Activated T-helper 1 cell treated with anti-CD3 and anti-CD28 coated beads, Interleukin-12 subunit alpha, Interleukin-12 subunit beta, Interleukin-2, Interleukin-4 antibody, amounts not matched to agents 30 ng/mL and 10 ng/mL and 1 ng/mL, durations not matched to agents 14 hours and 24 hours and 36 hours (primary cell): ENCODE measurements at regions of chr12 and their contacts with region 1.

Region 1: DNA sequence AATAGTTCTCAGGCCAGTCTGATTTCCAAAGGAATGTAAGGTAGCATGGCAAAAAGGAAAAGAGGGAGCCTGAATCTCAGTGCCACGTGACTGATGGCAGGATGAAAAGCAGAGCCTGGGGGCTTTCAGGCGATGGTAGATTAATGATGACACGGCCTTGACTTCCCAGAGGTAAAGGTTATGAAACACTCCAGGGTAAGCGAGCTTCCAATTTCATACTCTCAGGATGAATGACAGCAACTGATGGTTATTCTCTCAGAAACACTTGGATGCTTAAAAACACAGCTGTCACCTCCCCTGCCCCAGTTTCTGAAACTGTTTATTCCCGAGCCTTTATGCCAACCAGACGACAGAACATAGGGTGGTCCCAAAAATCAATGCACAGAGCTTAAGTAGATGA is 28.8 kb downstream of the GDF11 start:
- DNase-seq: no peak
- H3K4me3 Mint-ChIP-seq: no peak overlapping the region
- H3K27ac Mint-ChIP-seq: no peak overlapping the region
- H3K4me1 Mint-ChIP-seq: peaks cover 5% of the 10 kb centered on the region
- H3K27me3 Mint-ChIP-seq: no peaks in the 10 kb centered on the region

Region 2: DNA sequence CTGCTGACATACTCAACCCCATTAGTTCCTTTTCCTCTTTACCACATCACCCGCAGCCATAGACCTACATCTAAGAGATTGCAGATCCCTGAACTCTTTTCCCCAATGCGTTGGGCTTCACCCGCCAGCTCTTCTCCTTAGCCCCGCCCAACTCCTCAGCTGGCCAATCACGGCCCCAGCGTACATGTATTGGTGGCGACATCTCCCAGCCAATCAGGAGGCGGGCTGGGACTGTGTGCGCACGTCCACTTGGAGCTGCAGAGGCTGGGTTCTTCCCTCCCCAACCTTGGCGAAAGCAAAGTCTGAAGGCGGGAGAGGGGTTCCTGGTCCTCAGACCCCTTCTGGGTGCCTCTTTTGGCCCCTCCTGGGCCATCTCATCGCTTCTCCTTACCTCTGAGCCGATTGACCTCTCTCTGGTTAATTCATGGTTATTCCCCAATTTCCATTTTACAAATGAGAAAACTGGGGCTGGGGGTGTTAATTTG is 1211.3 kb before region 1 on chr12:
- intact Hi-C with region 1: no loop called
- DNase-seq: peak; percentile 86
- H3K4me3 Mint-ChIP-seq: peak overlapping the region; percentile 78
- H3K27ac Mint-ChIP-seq: peak overlapping the region; percentile 91
- H3K4me1 Mint-ChIP-seq: peaks cover 47% of the 10 kb centered on the region
- H3K27me3 Mint-ChIP-seq: no peaks in the 10 kb centered on the region

Region 3: GRCh38 chr12:55743116-55743921 is 28.4 kb before region 1 on chr12 and contains the start of gene GDF11:
- intact Hi-C with region 1: no loop called
- DNase-seq: peak; percentile 39
- H3K4me3 Mint-ChIP-seq: peak within 1 kb of the TSS; percentile 92
- H3K27ac Mint-ChIP-seq: peak within 1 kb of the TSS; percentile 60
- H3K4me1 Mint-ChIP-seq: peaks cover 49% of the 10 kb centered on the region
- H3K27me3 Mint-ChIP-seq: peaks cover 3% of the 10 kb centered on the region
- total RNA-seq, gene GDF11: 14.2 and 15.2 TPM in 2 replicates

Region 4: DNA sequence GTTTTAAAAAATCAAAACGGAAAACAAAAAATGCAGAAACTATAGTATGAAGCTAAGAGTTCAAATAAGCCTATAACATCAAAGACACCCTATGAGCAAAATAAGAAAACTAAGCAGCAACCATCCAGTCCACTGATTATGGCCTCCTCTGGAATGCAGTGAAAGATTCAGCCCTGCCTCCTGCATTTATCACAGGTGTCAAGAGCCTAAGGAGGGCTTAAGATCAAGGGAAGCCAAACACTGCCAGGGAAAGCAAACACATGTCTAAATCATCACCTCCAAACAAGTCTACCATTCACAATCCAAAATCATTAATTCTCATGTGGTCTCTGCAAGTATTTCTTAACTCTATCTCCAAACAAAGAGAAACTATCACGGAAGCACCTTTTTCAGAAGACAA is 17.4 kb after region 1 on chr12:
- intact Hi-C with region 1: loop called (anchors 2 kb)
- DNase-seq: no peak
- H3K4me3 Mint-ChIP-seq: no peak overlapping the region
- H3K27ac Mint-ChIP-seq: no peak overlapping the region
- H3K4me1 Mint-ChIP-seq: no peaks in the 10 kb centered on the region
- H3K27me3 Mint-ChIP-seq: no peaks in the 10 kb centered on the region

Region 5: DNA sequence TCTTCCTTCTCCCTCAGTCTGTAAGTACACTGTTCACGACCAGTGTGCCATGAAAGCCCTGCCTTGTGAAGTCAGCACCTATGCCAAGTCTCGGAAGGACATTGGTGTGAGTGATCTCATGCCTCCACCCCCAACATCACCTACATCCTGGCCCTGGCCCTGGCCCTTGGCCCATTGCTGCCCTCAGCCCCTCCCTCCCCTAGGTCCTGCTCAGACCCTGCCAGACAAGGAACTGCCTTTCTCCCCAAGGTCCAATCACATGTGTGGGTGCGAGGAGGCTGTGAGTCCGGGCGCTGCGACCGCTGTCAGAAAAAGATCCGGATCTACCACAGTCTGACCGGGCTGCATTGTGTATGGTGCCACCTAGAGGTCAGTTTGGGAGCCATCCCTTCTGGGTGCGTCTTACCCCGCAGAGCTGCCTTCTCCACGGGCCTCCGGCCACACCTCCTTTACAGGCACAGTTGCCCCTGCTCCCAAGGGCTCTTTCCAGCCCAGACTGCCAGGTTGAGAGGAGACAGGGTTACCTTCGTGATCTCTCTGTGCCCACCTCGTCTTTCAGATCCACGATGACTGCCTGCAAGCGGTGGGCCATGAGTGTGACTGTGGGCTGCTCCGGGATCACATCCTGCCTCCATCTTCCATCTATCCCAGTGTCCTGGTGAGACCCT is 168.5 kb after region 1 on chr12:
- intact Hi-C with region 1: no loop called
- DNase-seq: peak; percentile 76
- H3K4me3 Mint-ChIP-seq: peak overlapping the region; percentile 9
- H3K27ac Mint-ChIP-seq: peak overlapping the region; percentile 18
- H3K4me1 Mint-ChIP-seq: peaks cover 56% of the 10 kb centered on the region
- H3K27me3 Mint-ChIP-seq: no peaks in the 10 kb centered on the region